Activated CD4-positive, alpha-beta T cell treated with anti-CD3 and anti-CD28 coated beads, Interleukin-2, amount 10 ng/mL, durations not matched to agents 7 days and 5 days (primary cell): ENCODE measurements at regions of chr3 and their contacts with region 1.

Region 1: DNA sequence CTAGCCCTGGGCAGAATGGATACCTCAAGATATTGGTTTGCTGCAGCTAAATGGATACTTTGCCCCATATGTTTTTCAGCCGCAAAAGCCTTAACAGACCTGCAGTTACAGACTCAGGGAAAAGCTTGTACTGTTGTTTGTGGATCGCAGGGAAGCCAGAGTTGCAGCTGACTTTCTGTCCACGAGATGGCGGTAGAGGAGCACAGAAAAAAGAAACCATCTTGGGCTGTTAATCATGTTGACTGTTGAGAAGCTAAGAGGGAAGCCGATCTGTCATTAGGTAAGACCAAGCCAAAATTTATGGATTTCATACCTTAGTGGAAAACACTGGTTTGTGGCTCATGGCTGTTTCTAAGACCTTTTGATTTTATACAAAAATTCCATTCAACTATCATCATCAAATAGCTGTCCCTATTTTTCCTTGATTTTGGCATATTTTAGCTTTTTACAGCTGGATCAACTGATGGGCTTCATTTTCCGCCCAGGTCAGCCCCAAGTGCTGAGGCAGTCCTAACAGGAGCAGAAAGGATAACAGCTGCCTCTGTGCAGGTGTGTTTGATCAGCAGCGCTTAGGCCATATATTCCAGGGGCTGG is 205.7 kb upstream of the ZPLD1 start:
- DNase-seq: peak; percentile 77
- H3K4me3 Mint-ChIP-seq: no peak overlapping the region
- H3K27ac Mint-ChIP-seq: no peak overlapping the region
- H3K4me1 Mint-ChIP-seq: peaks cover 13% of the 10 kb centered on the region
- H3K27me3 Mint-ChIP-seq: peaks cover 18% of the 10 kb centered on the region

Region 2: GRCh38 chr3:101803173-101803782 is 425.9 kb before region 1 on chr3:
- CTCF ChIA-PET with region 1: interaction called, 11 read pairs
- POLR2A ChIA-PET with region 1: no interaction called
- DNase-seq: peak; percentile 83
- H3K4me3 Mint-ChIP-seq: no peak overlapping the region
- H3K27ac Mint-ChIP-seq: peak overlapping the region; percentile 66
- H3K4me1 Mint-ChIP-seq: peaks cover 18% of the 10 kb centered on the region
- H3K27me3 Mint-ChIP-seq: no peaks in the 10 kb centered on the region

Region 3: GRCh38 chr3:102307429-102307828 is 78.3 kb after region 1 on chr3:
- CTCF ChIA-PET with region 1: no interaction called
- POLR2A ChIA-PET with region 1: no interaction called
- DNase-seq: no peak
- H3K4me3 Mint-ChIP-seq: no peak overlapping the region
- H3K27ac Mint-ChIP-seq: no peak overlapping the region
- H3K4me1 Mint-ChIP-seq: no peaks in the 10 kb centered on the region
- H3K27me3 Mint-ChIP-seq: peaks cover 11% of the 10 kb centered on the region

Region 4: GRCh38 chr3:102536456-102536855 is 307.3 kb after region 1 on chr3:
- CTCF ChIA-PET with region 1: interaction called, 12 read pairs
- POLR2A ChIA-PET with region 1: no interaction called
- DNase-seq: no peak
- H3K4me3 Mint-ChIP-seq: no peak overlapping the region
- H3K27ac Mint-ChIP-seq: no peak overlapping the region
- H3K4me1 Mint-ChIP-seq: peaks cover 2% of the 10 kb centered on the region
- H3K27me3 Mint-ChIP-seq: peaks cover 6% of the 10 kb centered on the region